ENCODE measurements at regions of chr3 and their contacts with region 1.

Region 1: DNA sequence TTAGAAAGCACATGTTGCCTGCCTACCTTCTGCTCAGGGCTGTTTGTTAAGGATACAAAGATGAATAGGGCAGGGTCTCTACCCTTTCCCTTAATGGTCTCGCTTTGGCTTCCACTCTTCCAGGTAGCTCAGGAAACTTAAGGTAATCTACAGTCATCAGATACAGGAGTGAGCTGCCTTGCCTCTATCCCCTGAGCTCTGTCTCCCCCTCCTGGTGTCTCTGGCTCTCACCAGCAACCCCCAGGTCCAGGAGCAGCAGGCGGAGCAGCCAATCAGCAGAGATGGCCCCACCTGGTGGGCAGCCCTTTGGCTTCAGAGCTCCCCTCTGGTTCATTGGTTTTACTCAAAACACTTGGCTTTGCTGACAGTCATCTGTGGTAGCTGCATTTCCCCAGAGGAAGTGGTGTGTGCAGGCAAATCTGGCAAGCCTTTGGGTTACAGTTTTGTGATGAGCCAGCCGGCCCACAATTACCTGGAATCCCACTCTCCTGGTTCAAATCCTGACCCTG is 8.5 kb upstream of the CX3CR1 start:
- DNase-seq: peak; percentile 64 to 92 (median 78)
- ATAC-seq: peak; percentile 96
- H3K4me3 ChIP-seq: no peak overlapping the region
- H3K4me3 Mint-ChIP-seq: no peak overlapping the region
- H3K27ac ChIP-seq: peak overlapping the region in 1 of 2 experiments; percentile 41
- H3K27ac Mint-ChIP-seq: peak overlapping the region; percentile 20
- H3K4me1 ChIP-seq: peaks cover 6% of the 10 kb centered on the region
- H3K4me1 Mint-ChIP-seq: peaks cover 15% of the 10 kb centered on the region
- H3K27me3 ChIP-seq: no peaks in the 10 kb centered on the region
- H3K27me3 Mint-ChIP-seq: no peaks in the 10 kb centered on the region
- CTCF ChIP-seq: peak; percentile 82

Region 2: DNA sequence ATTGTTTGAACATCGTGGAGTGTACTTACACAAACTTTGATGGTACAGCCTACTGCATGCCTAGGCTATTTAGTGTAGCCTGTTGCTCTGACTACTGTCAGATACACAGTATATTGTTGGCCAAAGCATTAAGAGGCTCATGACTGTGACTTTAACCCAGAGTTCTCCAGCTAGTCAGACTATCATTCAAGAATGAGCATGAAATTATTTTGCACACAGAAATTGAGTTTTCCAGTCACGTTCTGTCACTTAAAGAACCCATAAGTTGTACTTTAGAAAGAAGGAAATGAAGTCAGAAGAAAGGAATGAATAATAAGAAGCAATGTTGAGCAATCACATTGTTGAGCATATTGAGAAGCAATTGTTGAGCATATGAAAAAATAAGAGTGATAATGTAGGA is 1060.4 kb before region 1 on chr3:
- CTCF ChIA-PET with region 1: no interaction called
- POLR2A ChIA-PET with region 1: no interaction called
- intact Hi-C with region 1: no loop called
- DNase-seq: no peak
- ATAC-seq: no peak
- H3K4me3 ChIP-seq: no peak overlapping the region
- H3K4me3 Mint-ChIP-seq: no peak overlapping the region
- H3K27ac ChIP-seq: no peak overlapping the region
- H3K27ac Mint-ChIP-seq: no peak overlapping the region
- H3K4me1 ChIP-seq: no peaks in the 10 kb centered on the region
- H3K4me1 Mint-ChIP-seq: no peaks in the 10 kb centered on the region
- H3K27me3 ChIP-seq: no peaks in the 10 kb centered on the region
- H3K27me3 Mint-ChIP-seq: no peaks in the 10 kb centered on the region
- CTCF ChIP-seq: no peak

Region 3: DNA sequence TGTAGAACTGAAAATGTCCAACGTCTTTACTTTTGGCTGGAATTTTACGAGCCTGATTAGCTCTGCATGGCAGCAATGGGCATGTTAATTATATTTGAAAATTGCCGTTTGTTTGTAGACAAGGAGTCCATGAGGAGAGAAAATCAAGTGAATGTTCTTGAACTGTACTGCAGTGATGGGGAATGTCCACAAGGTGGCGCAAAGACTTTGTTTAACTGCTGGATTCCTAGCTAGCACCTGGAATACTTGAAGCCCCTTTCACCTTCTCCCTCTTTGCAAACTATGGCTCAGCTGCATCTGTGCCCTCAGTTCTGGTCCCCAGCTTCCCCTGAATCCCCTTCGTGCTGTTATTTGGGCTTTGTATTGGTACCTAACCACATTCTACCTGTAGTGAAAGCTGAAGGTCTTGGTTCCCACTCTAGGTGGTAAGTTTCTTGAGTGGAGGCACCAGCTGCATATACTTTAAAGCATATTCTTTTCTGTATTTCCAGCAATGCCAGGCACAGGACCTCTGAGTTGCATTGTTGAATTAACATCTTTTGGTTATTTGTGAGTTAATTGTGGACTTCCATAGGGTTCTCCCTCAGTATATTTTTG is 766.9 kb before region 1 on chr3:
- CTCF ChIA-PET with region 1: interaction called, 16 read pairs
- POLR2A ChIA-PET with region 1: no interaction called
- intact Hi-C with region 1: loop called in 1 of 2 experiments (anchors 2 kb)
- DNase-seq: peak; percentile 24 to 80 (median 65)
- ATAC-seq: peak; percentile 67
- H3K4me3 ChIP-seq: no peak overlapping the region
- H3K4me3 Mint-ChIP-seq: no peak overlapping the region
- H3K27ac ChIP-seq: no peak overlapping the region
- H3K27ac Mint-ChIP-seq: no peak overlapping the region
- H3K4me1 ChIP-seq: peaks cover 30% of the 10 kb centered on the region
- H3K4me1 Mint-ChIP-seq: peaks cover 34% of the 10 kb centered on the region
- H3K27me3 ChIP-seq: no peaks in the 10 kb centered on the region
- H3K27me3 Mint-ChIP-seq: no peaks in the 10 kb centered on the region
- CTCF ChIP-seq: peak; percentile 83

Region 4: GRCh38 chr3:39118079-39118478 is 170.3 kb before region 1 on chr3:
- CTCF ChIA-PET with region 1: interaction called, 189 read pairs
- POLR2A ChIA-PET with region 1: no interaction called
- intact Hi-C with region 1: no loop called
- DNase-seq: no peak
- ATAC-seq: no peak
- H3K4me3 ChIP-seq: no peak overlapping the region
- H3K4me3 Mint-ChIP-seq: no peak overlapping the region
- H3K27ac ChIP-seq: no peak overlapping the region
- H3K27ac Mint-ChIP-seq: no peak overlapping the region
- H3K4me1 ChIP-seq: no peaks in the 10 kb centered on the region
- H3K4me1 Mint-ChIP-seq: no peaks in the 10 kb centered on the region
- H3K27me3 ChIP-seq: no peaks in the 10 kb centered on the region
- H3K27me3 Mint-ChIP-seq: no peaks in the 10 kb centered on the region
- CTCF ChIP-seq: no peak

Region 5: DNA sequence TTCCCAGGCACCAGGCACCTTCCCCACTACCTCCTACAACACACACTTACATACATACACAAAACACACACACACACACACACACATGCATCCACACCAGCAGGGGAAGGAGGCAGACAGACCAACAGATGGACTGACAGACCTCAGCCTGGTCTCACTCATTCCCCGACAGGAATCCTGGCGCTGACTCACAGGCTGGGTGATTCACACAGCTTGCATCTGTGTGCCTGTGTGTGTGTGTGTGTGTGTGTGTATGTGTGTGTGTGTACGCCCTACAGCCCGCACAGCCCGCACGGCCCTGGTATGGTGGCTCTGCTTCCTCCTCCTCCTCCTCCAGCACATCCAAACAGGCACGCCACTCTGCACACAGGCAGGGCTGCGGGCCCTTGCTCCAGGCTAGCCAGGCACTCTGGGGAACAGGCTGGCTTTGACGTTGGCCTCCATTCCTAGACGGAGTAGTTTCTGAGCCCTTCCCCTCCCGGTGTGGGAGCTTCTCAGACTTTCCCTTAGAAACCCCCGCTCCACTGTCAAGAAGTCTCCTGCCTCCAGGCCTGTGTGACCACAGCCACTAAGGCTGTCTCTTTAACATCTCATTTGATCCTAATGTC is 141.3 kb before region 1 on chr3:
- CTCF ChIA-PET with region 1: interaction called, 14 read pairs
- POLR2A ChIA-PET with region 1: no interaction called
- intact Hi-C with region 1: no loop called
- DNase-seq: peak in 8 of 9 experiments; percentile 58 to 73 (median 68)
- ATAC-seq: peak; percentile 24
- H3K4me3 ChIP-seq: peak overlapping the region; percentile 29 to 55
- H3K4me3 Mint-ChIP-seq: peak overlapping the region; percentile 95
- H3K27ac ChIP-seq: peak overlapping the region; percentile 63 to 76
- H3K27ac Mint-ChIP-seq: peak overlapping the region; percentile 98
- H3K4me1 ChIP-seq: peaks cover 57% of the 10 kb centered on the region
- H3K4me1 Mint-ChIP-seq: peaks cover 67% of the 10 kb centered on the region
- H3K27me3 ChIP-seq: no peaks in the 10 kb centered on the region
- H3K27me3 Mint-ChIP-seq: no peaks in the 10 kb centered on the region
- CTCF ChIP-seq: no peak

Region 6: DNA sequence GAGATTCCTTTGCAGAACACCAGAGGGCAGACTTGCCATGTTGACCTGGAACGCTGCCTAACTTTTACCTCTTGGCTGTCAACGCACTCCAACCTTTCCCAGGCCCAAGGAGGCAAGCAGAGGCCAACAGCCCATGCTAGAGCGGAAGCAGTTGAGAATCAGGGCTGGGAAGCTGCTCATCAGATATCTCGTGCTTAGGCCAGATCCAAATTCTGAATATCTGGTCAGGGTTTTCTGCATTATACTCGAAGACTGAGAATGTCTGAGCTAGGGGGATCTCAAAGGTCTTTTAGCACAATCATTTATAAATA is 98.4 kb before region 1 on chr3:
- CTCF ChIA-PET with region 1: interaction called, 396 read pairs
- POLR2A ChIA-PET with region 1: interaction called, 5 read pairs
- intact Hi-C with region 1: loop called (anchors 1 kb)
- DNase-seq: peak; percentile 14 to 82 (median 53)
- ATAC-seq: peak; percentile 89
- H3K4me3 ChIP-seq: no peak overlapping the region
- H3K4me3 Mint-ChIP-seq: no peak overlapping the region
- H3K27ac ChIP-seq: no peak overlapping the region
- H3K27ac Mint-ChIP-seq: no peak overlapping the region
- H3K4me1 ChIP-seq: no peaks in the 10 kb centered on the region
- H3K4me1 Mint-ChIP-seq: peaks cover 6% of the 10 kb centered on the region
- H3K27me3 ChIP-seq: no peaks in the 10 kb centered on the region
- H3K27me3 Mint-ChIP-seq: no peaks in the 10 kb centered on the region
- CTCF ChIP-seq: peak; percentile 69

Region 7: GRCh38 chr3:39234705-39235104 is 53.6 kb before region 1 on chr3:
- CTCF ChIA-PET with region 1: interaction called, 11 read pairs
- POLR2A ChIA-PET with region 1: no interaction called
- intact Hi-C with region 1: no loop called
- DNase-seq: peak in 6 of 9 experiments; percentile 22 to 86 (median 38)
- ATAC-seq: peak; percentile 82
- H3K4me3 ChIP-seq: peak overlapping the region in 1 of 2 experiments; percentile 48
- H3K4me3 Mint-ChIP-seq: peak overlapping the region; percentile 24
- H3K27ac ChIP-seq: peak overlapping the region in 1 of 2 experiments; percentile 80
- H3K27ac Mint-ChIP-seq: peak overlapping the region; percentile 19
- H3K4me1 ChIP-seq: peaks cover 8% of the 10 kb centered on the region
- H3K4me1 Mint-ChIP-seq: peaks cover 27% of the 10 kb centered on the region
- H3K27me3 ChIP-seq: no peaks in the 10 kb centered on the region
- H3K27me3 Mint-ChIP-seq: peaks cover 5% of the 10 kb centered on the region
- CTCF ChIP-seq: no peak

Region 8: DNA sequence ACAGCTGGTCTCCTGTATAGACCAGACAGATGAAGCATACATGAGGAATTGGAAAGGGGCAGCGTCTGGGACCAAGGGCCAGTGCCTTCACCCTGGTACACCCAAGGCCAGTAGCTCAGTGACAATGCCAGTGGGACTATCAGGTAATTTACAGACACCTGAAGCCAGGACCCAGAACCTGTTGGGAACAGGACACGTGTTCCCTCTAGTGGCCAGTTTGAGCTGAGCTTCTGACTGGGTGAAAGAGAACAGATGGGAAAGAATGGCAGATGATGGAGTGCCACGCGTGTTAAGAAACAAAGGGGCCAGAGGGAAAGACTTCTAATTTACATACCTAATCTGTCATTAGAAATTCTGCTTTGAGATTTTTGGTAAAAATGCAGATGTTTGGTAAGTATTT is 89.7 kb after region 1 on chr3:
- CTCF ChIA-PET with region 1: interaction called, 36 read pairs
- POLR2A ChIA-PET with region 1: no interaction called
- intact Hi-C with region 1: loop called (anchors 2 to 5 kb)
- DNase-seq: peak; percentile 23 to 78 (median 63)
- ATAC-seq: peak; percentile 81
- H3K4me3 ChIP-seq: no peak overlapping the region
- H3K4me3 Mint-ChIP-seq: no peak overlapping the region
- H3K27ac ChIP-seq: no peak overlapping the region
- H3K27ac Mint-ChIP-seq: no peak overlapping the region
- H3K4me1 ChIP-seq: peaks cover 6% of the 10 kb centered on the region
- H3K4me1 Mint-ChIP-seq: peaks cover 11% of the 10 kb centered on the region
- H3K27me3 ChIP-seq: no peaks in the 10 kb centered on the region
- H3K27me3 Mint-ChIP-seq: peaks cover 6% of the 10 kb centered on the region
- CTCF ChIP-seq: peak; percentile 65

Region 9: GRCh38 chr3:39531650-39532049 is 243.3 kb after region 1 on chr3:
- CTCF ChIA-PET with region 1: no interaction called
- POLR2A ChIA-PET with region 1: no interaction called
- intact Hi-C with region 1: no loop called
- DNase-seq: no peak
- ATAC-seq: no peak
- H3K4me3 ChIP-seq: no peak overlapping the region
- H3K4me3 Mint-ChIP-seq: no peak overlapping the region
- H3K27ac ChIP-seq: no peak overlapping the region
- H3K27ac Mint-ChIP-seq: no peak overlapping the region
- H3K4me1 ChIP-seq: no peaks in the 10 kb centered on the region
- H3K4me1 Mint-ChIP-seq: no peaks in the 10 kb centered on the region
- H3K27me3 ChIP-seq: no peaks in the 10 kb centered on the region
- H3K27me3 Mint-ChIP-seq: peaks cover 21% of the 10 kb centered on the region
- CTCF ChIP-seq: no peak